ENCODE measurements at regions of chr5 and their contacts with region 1.

Region 1: GRCh38 chr5:137320056-137321045 is 178.8 kb downstream of the SPOCK1 start:
- DNase-seq: peak; percentile 60

Region 2: DNA sequence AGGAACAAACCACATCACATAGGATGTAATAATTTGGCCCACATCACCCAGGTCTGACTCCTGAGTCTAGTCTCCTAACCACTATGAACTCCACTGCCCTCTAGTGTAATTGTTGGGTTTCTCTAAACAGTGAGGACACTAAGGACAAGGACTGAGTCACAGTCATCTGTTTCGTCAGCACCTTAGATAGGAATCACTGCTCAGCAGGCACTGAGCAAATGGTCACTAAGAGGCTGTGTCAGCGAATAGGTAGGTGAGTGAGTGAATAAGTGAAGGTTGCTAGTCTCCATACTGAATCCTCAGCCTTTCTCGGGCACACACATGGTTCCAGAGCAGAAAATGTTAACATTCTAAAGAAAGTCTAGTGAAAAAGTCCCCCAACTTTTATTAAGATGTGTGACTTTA is 99.8 kb before region 1 on chr5:
- in situ Hi-C with region 1: no loop called
- DNase-seq: peak; percentile 85

Region 3: GRCh38 chr5:137498736-137499505 is 178.6 kb after region 1 on chr5 and contains the start of gene SPOCK1:
- in situ Hi-C with region 1: loop called (anchors 10 kb)
- DNase-seq: peak; percentile 81